ENCODE measurements at regions of chr3 and their contacts with region 1.

Region 1: GRCh38 chr3:61251174-61251972 is at the start of gene FHIT:
- DNase-seq: peak; percentile 92
- ATAC-seq: peak; percentile 90
- H3K4me3 ChIP-seq: peak within 1 kb of the TSS; percentile 63 to 89 (median 66)
- H3K4me3 Mint-ChIP-seq: peak within 1 kb of the TSS; percentile 91
- H3K27ac ChIP-seq: peak within 1 kb of the TSS; percentile 63 to 82
- H3K27ac Mint-ChIP-seq: peak within 1 kb of the TSS; percentile 96
- H3K4me1 ChIP-seq: peaks cover 15 to 17% of the 10 kb centered on the region in 2 donors
- H3K4me1 Mint-ChIP-seq: peaks cover 22% of the 10 kb centered on the region
- H3K27me3 ChIP-seq: no peaks in the 10 kb centered on the region
- H3K27me3 Mint-ChIP-seq: peaks cover 10% of the 10 kb centered on the region
- CTCF ChIP-seq: no peak
- total RNA-seq, gene FHIT: 7.0 and 7.8 TPM in 2 replicates

Region 2: DNA sequence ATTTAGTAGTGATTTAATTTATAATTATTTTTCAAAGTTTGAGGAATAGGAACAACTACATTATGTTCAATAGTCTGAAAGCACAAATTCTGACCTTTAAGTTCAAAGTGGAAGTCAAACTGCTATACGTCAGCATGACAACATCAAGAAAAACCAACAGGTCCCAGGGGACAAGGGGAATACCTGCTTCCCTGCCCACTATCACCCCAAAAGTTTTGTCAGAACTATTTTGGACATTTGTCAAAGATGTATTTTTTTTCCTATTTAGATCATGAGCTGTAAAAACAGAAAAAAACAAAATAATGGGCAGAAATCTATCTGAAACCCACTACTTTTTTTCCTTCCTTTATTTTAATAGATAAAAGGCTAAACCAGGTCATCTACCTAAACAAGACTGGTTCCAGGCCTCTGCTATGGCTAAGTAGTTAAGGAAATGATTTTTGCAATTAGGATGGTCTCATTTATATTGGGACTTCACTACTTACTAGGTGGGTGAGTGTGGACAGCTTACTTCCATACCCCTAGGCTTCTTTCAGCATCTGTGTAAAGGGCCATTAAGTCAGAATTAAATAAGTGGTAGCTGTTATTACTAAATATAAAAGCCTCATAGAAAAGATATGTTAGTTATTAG is 746.4 kb before region 1 on chr3:
- CTCF ChIA-PET with region 1: no interaction called
- POLR2A ChIA-PET with region 1: no interaction called
- intact Hi-C with region 1: loop called (anchors 2 kb)
- DNase-seq: peak; percentile 60
- ATAC-seq: peak; percentile 91
- H3K4me3 ChIP-seq: no peak overlapping the region
- H3K4me3 Mint-ChIP-seq: no peak overlapping the region
- H3K27ac ChIP-seq: peak overlapping the region in 1 of 2 donors; percentile 24
- H3K27ac Mint-ChIP-seq: peak overlapping the region; percentile 62
- H3K4me1 ChIP-seq: peaks cover 5 to 8% of the 10 kb centered on the region in 2 donors
- H3K4me1 Mint-ChIP-seq: peaks cover 8% of the 10 kb centered on the region
- H3K27me3 ChIP-seq: no peaks in the 10 kb centered on the region
- H3K27me3 Mint-ChIP-seq: no peaks in the 10 kb centered on the region
- CTCF ChIP-seq: no peak

Region 3: DNA sequence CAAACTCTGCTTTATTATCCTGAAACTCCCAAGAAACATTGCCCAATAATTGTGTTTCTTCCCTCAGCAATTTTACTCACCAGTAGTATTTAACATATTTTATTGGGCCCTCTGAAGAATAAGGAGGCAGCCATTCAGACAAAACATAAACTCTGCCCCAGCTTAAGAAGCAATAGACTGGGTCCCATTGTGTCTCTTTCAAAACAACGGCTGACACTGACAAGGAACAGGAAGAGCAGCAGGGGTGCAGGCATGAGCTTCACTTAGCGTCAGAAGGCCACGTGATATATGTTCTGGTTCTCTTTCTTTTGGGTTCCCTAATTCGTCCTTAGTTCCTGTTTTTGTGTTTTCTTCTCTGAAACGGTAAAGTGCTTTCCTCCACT is 242.4 kb before region 1 on chr3:
- CTCF ChIA-PET with region 1: no interaction called
- POLR2A ChIA-PET with region 1: no interaction called
- intact Hi-C with region 1: loop called (anchors 2 kb)
- DNase-seq: peak; percentile 73
- ATAC-seq: peak; percentile 88
- H3K4me3 ChIP-seq: peak overlapping the region in 2 of 5 experiments; percentile 13 to 36
- H3K4me3 Mint-ChIP-seq: peak overlapping the region; percentile 79
- H3K27ac ChIP-seq: peak overlapping the region; percentile 43 to 76
- H3K27ac Mint-ChIP-seq: peak overlapping the region; percentile 89
- H3K4me1 ChIP-seq: peaks cover 13 to 18% of the 10 kb centered on the region in 2 donors
- H3K4me1 Mint-ChIP-seq: peaks cover 21% of the 10 kb centered on the region
- H3K27me3 ChIP-seq: no peaks in the 10 kb centered on the region
- H3K27me3 Mint-ChIP-seq: no peaks in the 10 kb centered on the region
- CTCF ChIP-seq: no peak

Region 4: DNA sequence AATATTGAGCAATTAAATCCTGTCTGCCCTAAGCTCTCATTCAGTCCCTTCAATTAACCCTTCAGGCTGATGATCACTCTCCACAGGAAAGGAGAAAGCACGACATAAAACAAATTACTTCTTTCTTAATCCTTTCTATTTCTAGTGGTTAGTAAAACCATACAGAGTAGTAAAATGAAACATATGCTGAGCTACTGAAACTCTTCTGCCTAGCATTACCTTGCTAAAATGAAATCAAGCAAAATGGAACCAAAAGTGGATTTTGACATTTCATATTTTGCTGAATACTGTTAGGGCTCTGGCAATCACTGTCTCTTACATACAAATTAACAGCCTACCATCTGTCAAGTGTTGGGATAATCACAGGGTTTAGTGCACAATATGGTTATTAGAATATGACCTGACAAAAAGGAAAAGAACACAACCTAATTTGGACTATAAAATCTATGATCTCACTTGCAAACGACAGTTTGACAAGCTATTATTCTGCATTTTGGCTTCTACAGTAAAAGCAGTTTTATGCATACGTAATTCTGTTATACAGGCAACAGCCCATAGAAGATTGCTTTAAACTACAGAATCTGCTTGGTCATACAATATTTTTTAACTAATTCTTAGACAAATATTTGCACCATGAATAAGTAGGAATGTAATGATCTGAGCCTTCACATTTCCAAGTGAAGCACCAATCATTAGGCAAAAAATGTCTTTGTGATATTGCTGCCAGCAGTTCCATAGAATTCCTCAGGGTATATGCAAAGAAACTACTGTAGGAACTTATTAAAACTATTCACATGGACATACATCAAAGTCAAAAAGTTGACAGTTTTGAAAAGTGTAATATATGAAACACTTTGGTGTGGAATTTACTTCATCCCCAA is 105.1 kb before region 1 on chr3:
- CTCF ChIA-PET with region 1: no interaction called
- POLR2A ChIA-PET with region 1: no interaction called
- intact Hi-C with region 1: no loop called
- DNase-seq: no peak
- ATAC-seq: no peak
- H3K4me3 ChIP-seq: no peak overlapping the region
- H3K4me3 Mint-ChIP-seq: no peak overlapping the region
- H3K27ac ChIP-seq: no peak overlapping the region
- H3K27ac Mint-ChIP-seq: no peak overlapping the region
- H3K4me1 ChIP-seq: no peaks in the 10 kb centered on the region
- H3K4me1 Mint-ChIP-seq: no peaks in the 10 kb centered on the region
- H3K27me3 ChIP-seq: no peaks in the 10 kb centered on the region
- H3K27me3 Mint-ChIP-seq: no peaks in the 10 kb centered on the region
- CTCF ChIP-seq: no peak

Region 5: DNA sequence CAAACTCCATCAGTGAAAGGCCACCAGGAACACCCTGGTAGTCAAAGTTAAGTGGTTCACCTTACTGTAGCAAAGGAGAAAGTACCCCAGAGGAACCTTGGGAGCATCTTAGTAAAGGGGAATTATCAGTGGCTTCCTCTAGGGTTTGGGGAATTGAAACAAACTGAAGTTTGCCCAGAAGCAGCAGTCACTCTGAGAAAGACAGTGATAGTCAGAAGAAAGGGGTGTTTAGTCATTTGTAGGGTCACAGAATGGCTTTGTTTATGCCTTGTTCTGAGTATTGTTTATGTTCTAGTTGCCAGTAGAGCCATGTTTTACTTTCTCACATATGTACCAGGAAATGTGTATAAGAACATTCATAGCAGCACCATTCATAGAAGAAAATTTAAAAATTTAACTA is 94.0 kb before region 1 on chr3:
- CTCF ChIA-PET with region 1: no interaction called
- POLR2A ChIA-PET with region 1: no interaction called
- intact Hi-C with region 1: no loop called
- DNase-seq: no peak
- ATAC-seq: no peak
- H3K4me3 ChIP-seq: no peak overlapping the region
- H3K4me3 Mint-ChIP-seq: no peak overlapping the region
- H3K27ac ChIP-seq: no peak overlapping the region
- H3K27ac Mint-ChIP-seq: no peak overlapping the region
- H3K4me1 ChIP-seq: no peaks in the 10 kb centered on the region
- H3K4me1 Mint-ChIP-seq: no peaks in the 10 kb centered on the region
- H3K27me3 ChIP-seq: no peaks in the 10 kb centered on the region
- H3K27me3 Mint-ChIP-seq: no peaks in the 10 kb centered on the region
- CTCF ChIP-seq: no peak

Region 6: GRCh38 chr3:62318750-62319569 is 1067.6 kb after region 1 on chr3:
- CTCF ChIA-PET with region 1: no interaction called
- POLR2A ChIA-PET with region 1: no interaction called
- intact Hi-C with region 1: loop called (anchors 5 kb)
- DNase-seq: peak; percentile 70
- ATAC-seq: peak; percentile 92
- H3K4me3 ChIP-seq: peak overlapping the region in 4 of 5 experiments; percentile 30 to 55 (median 48)
- H3K4me3 Mint-ChIP-seq: peak overlapping the region; percentile 97
- H3K27ac ChIP-seq: no peak overlapping the region
- H3K27ac Mint-ChIP-seq: peak overlapping the region; percentile 94
- H3K4me1 ChIP-seq: peaks cover 5 to 9% of the 10 kb centered on the region in 2 donors
- H3K4me1 Mint-ChIP-seq: peaks cover 12% of the 10 kb centered on the region
- H3K27me3 ChIP-seq: peaks cover 0 to 16% (median 3%) of the 10 kb centered on the region in 4 experiments
- H3K27me3 Mint-ChIP-seq: peaks cover 19% of the 10 kb centered on the region
- CTCF ChIP-seq: no peak

Measured in B cell (primary cell).